PC-9 (cell line): ENCODE measurements at regions of chr2 and their contacts with region 1.

Region 1: GRCh38 chr2:38293152-38293865 is 83.8 kb downstream of the ATL2 start:
- DNase-seq: no peak
- H3K4me3 ChIP-seq: no peak overlapping the region
- H3K27ac ChIP-seq: no peak overlapping the region
- H3K4me1 ChIP-seq: no peaks in the 10 kb centered on the region
- H3K27me3 ChIP-seq: no peaks in the 10 kb centered on the region
- CTCF ChIP-seq: no peak

Region 2: DNA sequence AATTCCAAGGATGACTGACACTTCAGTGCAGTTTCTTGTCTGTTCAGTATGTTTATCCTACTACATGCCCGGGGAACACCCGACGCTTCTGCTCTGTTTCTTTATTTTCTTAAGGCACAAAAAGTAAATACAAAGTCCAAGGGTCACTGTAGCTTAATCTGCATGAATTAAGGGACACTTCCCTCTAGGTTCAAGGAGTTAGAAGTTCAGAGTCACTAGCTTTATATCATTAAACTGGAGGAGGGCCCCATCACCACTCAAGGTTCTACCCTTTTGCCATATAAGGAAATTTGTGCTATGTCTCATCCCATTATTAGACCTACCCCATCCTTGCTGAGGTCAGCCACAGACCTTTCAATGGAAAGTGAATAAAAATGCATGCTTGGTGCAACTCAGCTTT is 395.8 kb before region 1 on chr2:
- CTCF ChIA-PET with region 1: no interaction called
- POLR2A ChIA-PET with region 1: no interaction called
- intact Hi-C with region 1: no loop called
- DNase-seq: no peak
- H3K4me3 ChIP-seq: no peak overlapping the region
- H3K27ac ChIP-seq: no peak overlapping the region
- H3K4me1 ChIP-seq: no peaks in the 10 kb centered on the region
- H3K27me3 ChIP-seq: no peaks in the 10 kb centered on the region
- CTCF ChIP-seq: no peak

Region 3: DNA sequence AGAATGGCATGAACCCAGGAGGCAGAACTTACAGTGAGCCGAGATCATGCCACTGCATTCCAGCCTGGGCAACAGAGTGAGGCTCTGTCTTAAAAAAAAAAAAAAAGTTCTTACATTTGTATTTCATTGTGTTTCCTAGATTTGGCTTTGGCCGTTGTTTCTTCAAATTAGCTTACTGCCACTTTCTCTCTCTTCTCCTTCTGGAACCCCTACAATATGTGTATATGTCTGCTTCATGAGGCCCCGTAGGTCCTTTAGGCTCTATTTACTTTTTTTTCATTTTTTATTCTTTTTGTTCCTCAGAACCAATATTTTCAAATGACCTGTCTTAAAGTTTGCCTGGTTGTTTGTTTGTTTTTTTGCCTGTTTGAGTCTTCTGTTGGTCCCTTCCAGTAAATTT is 327.0 kb before region 1 on chr2:
- CTCF ChIA-PET with region 1: no interaction called
- POLR2A ChIA-PET with region 1: no interaction called
- intact Hi-C with region 1: no loop called
- DNase-seq: no peak
- H3K4me3 ChIP-seq: no peak overlapping the region
- H3K27ac ChIP-seq: no peak overlapping the region
- H3K4me1 ChIP-seq: peaks cover 11% of the 10 kb centered on the region; the same call in 1 of the 2 replicates
- H3K27me3 ChIP-seq: no peaks in the 10 kb centered on the region
- CTCF ChIP-seq: no peak

Region 4: DNA sequence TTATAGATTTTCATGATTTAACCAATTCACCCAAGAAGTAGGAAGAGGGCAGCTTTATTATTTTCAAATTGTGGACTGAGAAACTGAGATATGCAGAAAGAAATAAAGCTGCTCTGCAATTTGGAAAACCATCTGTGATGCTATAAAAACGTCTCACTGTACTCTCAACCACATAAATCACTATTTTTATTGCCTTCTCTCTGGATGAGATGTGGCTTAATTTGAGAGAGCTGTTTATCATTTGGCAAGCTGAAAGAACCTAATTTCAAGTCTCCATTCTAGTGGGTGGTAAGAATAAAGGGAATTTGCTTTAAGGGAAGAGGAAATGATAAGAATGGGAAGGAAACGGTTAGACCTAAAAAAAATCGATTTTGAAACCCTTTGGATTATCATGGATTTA is 167.5 kb before region 1 on chr2:
- CTCF ChIA-PET with region 1: no interaction called
- POLR2A ChIA-PET with region 1: interaction called, 39 read pairs
- intact Hi-C with region 1: no loop called
- DNase-seq: no peak
- H3K4me3 ChIP-seq: no peak overlapping the region
- H3K27ac ChIP-seq: no peak overlapping the region
- H3K4me1 ChIP-seq: no peaks in the 10 kb centered on the region
- H3K27me3 ChIP-seq: no peaks in the 10 kb centered on the region
- CTCF ChIP-seq: no peak

Region 5: GRCh38 chr2:38352336-38352735 is 59.0 kb after region 1 on chr2:
- CTCF ChIA-PET with region 1: interaction called, 11 read pairs
- POLR2A ChIA-PET with region 1: no interaction called
- intact Hi-C with region 1: no loop called
- DNase-seq: no peak
- H3K4me3 ChIP-seq: no peak overlapping the region
- H3K27ac ChIP-seq: no peak overlapping the region
- H3K4me1 ChIP-seq: no peaks in the 10 kb centered on the region
- H3K27me3 ChIP-seq: no peaks in the 10 kb centered on the region
- CTCF ChIP-seq: no peak

Region 6: GRCh38 chr2:39568561-39569006 is 1275.3 kb after region 1 on chr2:
- CTCF ChIA-PET with region 1: no interaction called
- POLR2A ChIA-PET with region 1: no interaction called
- intact Hi-C with region 1: no loop called
- DNase-seq: peak; percentile 57 to 89
- H3K4me3 ChIP-seq: peak overlapping the region; percentile 40; the same call in 1 of the 2 replicates
- H3K27ac ChIP-seq: peak overlapping the region; percentile 83
- H3K4me1 ChIP-seq: peaks cover 49% of the 10 kb centered on the region
- H3K27me3 ChIP-seq: no peaks in the 10 kb centered on the region
- CTCF ChIP-seq: no peak